ENCODE measurements at regions of chr14 and their contacts with region 1.

Region 1: GRCh38 chr14:52695481-52696091 is at the start of gene ERO1A:
- DNase-seq: peak; percentile 56 to 71 (median 60)
- H3K4me3 ChIP-seq: peak within 1 kb of the TSS; percentile 96 to 99
- H3K4me3 Mint-ChIP-seq: peak within 1 kb of the TSS; percentile 98 to 100 (median 99)
- H3K27ac ChIP-seq: peak within 1 kb of the TSS; percentile 81
- H3K27ac Mint-ChIP-seq: peak within 1 kb of the TSS; percentile 88 to 99 (median 98)
- H3K4me1 ChIP-seq: peaks cover 39% of the 10 kb centered on the region
- H3K4me1 Mint-ChIP-seq: peaks cover 26 to 47% (median 40%) of the 10 kb centered on the region in 4 donors
- H3K27me3 ChIP-seq: no peaks in the 10 kb centered on the region
- H3K27me3 Mint-ChIP-seq: no peaks in the 10 kb centered on the region
- total RNA-seq, gene ERO1A: 93.8 to 98.3 TPM

Region 2: GRCh38 chr14:52678591-52678990 is 17.0 kb before region 1 on chr14:
- CTCF ChIA-PET with region 1: interaction called, 3 read pairs
- POLR2A ChIA-PET with region 1: interaction called, 7 read pairs
- intact Hi-C with region 1: loop called (anchors 2 kb)
- DNase-seq: peak in 4 of 5 donors; percentile 12 to 32 (median 23)
- H3K4me3 ChIP-seq: no peak overlapping the region
- H3K4me3 Mint-ChIP-seq: no peak overlapping the region
- H3K27ac ChIP-seq: no peak overlapping the region
- H3K27ac Mint-ChIP-seq: no peak overlapping the region
- H3K4me1 ChIP-seq: no peaks in the 10 kb centered on the region
- H3K4me1 Mint-ChIP-seq: peaks cover 2 to 19% (median 4%) of the 10 kb centered on the region in 4 donors
- H3K27me3 ChIP-seq: no peaks in the 10 kb centered on the region
- H3K27me3 Mint-ChIP-seq: no peaks in the 10 kb centered on the region

Region 3: DNA sequence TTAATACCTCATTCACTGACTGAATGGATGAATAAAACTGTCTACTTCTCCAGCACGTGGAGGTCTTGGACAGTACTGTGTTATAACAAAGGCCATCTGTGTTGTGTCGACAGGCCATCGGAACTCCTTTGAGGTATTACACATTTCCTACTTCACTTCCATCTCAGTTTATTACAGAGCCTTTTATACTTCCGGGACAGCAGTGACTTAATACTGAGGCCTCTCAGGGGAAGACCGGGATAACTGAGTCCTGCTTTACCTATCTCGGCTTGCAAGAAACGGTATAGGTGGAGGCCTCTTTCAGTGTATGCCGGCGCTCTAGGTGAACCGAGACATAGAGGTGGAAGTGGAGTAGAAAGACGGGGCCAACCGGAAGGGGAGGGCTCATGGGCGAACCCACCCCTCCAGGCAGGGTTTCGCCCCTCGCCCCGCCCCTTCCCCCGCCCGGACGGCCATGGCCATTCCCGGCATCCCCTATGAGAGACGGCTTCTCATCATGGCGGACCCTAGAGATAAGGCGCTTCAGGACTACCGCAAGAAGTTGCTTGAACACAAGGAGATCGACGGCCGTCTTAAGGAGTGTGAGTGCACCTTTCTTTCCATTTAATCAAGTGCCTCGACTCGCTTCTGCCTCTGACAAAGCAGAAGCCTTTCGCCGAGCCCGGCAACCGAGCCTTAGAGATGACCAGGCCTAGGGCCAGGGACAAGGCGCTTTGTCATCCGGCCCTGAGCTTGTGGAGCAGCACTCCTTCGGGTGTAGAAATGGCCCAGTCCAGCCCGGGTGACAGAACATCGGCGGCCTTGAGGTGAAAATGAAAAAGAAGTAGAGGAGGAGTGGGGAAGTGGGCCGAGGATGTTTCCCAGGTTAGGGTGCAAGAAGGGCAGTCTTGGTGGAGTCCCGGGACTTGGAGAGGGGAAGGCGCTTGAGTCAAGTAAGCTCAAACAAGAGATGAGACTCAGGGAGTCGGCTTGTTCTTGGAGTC is 11.4 kb after region 1 on chr14 and contains the start of gene PSMC6:
- CTCF ChIA-PET with region 1: interaction called, 6 read pairs
- POLR2A ChIA-PET with region 1: interaction called, 29 read pairs
- intact Hi-C with region 1: loop called (anchors 1 kb)
- DNase-seq: peak; percentile 88 to 95 (median 90)
- H3K4me3 ChIP-seq: peak within 1 kb of the TSS; percentile 92 to 96
- H3K4me3 Mint-ChIP-seq: peak within 1 kb of the TSS; percentile 92 to 100 (median 96)
- H3K27ac ChIP-seq: peak within 1 kb of the TSS; percentile 77
- H3K27ac Mint-ChIP-seq: peak within 1 kb of the TSS; percentile 94 to 99 (median 98)
- H3K4me1 ChIP-seq: peaks cover 43% of the 10 kb centered on the region
- H3K4me1 Mint-ChIP-seq: peaks cover 20 to 56% (median 36%) of the 10 kb centered on the region in 4 donors
- H3K27me3 ChIP-seq: no peaks in the 10 kb centered on the region
- H3K27me3 Mint-ChIP-seq: no peaks in the 10 kb centered on the region
- total RNA-seq, gene PSMC6: 85.7 to 86.0 TPM

Region 4: GRCh38 chr14:52741865-52742264 is 46.3 kb after region 1 on chr14:
- CTCF ChIA-PET with region 1: interaction called, 6 read pairs
- POLR2A ChIA-PET with region 1: interaction called, 20 read pairs
- intact Hi-C with region 1: loop called (anchors 2 kb)
- DNase-seq: peak; percentile 34 to 47 (median 39)
- H3K4me3 ChIP-seq: peak overlapping the region; percentile 2 to 24
- H3K4me3 Mint-ChIP-seq: peak overlapping the region; percentile 72 to 94 (median 83)
- H3K27ac ChIP-seq: peak overlapping the region; percentile 82
- H3K27ac Mint-ChIP-seq: peak overlapping the region; percentile 90 to 97 (median 94)
- H3K4me1 ChIP-seq: peaks cover 95% of the 10 kb centered on the region
- H3K4me1 Mint-ChIP-seq: peaks cover 45 to 82% (median 65%) of the 10 kb centered on the region in 4 donors
- H3K27me3 ChIP-seq: no peaks in the 10 kb centered on the region
- H3K27me3 Mint-ChIP-seq: no peaks in the 10 kb centered on the region

Region 5: GRCh38 chr14:52791203-52792096 is 95.9 kb after region 1 on chr14 and contains the start of gene GNPNAT1:
- CTCF ChIA-PET with region 1: no interaction called
- POLR2A ChIA-PET with region 1: interaction called, 11 read pairs
- intact Hi-C with region 1: no loop called
- DNase-seq: peak; percentile 90 to 93 (median 92)
- H3K4me3 ChIP-seq: peak within 1 kb of the TSS; percentile 57 to 90
- H3K4me3 Mint-ChIP-seq: peak within 1 kb of the TSS; percentile 88 to 97 (median 92)
- H3K27ac ChIP-seq: peak within 1 kb of the TSS; percentile 70
- H3K27ac Mint-ChIP-seq: peak within 1 kb of the TSS; percentile 90 to 96 (median 94)
- H3K4me1 ChIP-seq: peaks cover 32% of the 10 kb centered on the region
- H3K4me1 Mint-ChIP-seq: peaks cover 27 to 48% (median 36%) of the 10 kb centered on the region in 4 donors
- H3K27me3 ChIP-seq: no peaks in the 10 kb centered on the region
- H3K27me3 Mint-ChIP-seq: no peaks in the 10 kb centered on the region
- total RNA-seq, gene GNPNAT1: 10.0 to 15.2 TPM